ENCODE measurements at regions of chr4 and their contacts with region 1.

Region 1: DNA sequence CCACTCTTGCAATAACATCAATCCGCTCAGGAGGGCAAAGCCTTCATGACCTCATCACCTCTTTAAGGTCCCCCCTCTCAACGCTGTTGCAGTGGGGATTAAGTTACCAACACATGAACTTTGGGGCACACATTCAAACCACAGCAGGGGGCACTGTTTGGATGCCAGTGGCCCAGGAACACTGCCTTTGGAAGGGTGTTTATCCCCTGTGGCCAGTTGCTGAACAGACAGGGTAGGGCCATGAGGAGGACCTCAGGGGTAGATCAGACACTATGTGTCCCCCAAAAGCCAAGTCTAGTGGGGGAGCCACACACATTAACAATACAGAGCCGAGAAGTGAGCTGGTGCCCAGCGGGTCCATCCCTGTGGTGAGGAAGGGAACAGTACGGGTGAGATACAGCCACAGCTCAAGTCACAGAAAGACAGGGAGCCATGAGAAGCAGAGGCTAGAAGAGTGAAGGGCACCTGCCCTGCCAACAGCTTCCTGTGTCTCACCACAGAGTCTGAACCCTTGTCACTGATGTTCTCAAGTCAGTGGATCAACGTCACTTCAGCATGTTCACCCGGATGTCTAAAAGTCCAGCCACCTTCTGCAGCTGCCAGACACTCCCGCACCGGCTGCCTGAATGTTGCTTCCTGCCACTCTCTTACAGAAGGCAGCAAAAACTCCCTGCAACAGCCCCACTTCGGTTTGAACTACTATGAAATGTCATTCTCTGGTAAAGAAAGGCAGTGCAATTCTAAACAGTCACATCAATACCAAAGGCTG is 19.9 kb upstream of the MXD4 start:
- DNase-seq: peak; percentile 83
- ATAC-seq: peak; percentile 96
- H3K4me3 Mint-ChIP-seq: no peak overlapping the region
- H3K27ac Mint-ChIP-seq: peak overlapping the region; percentile 82
- H3K4me1 Mint-ChIP-seq: peaks cover 34% of the 10 kb centered on the region
- H3K27me3 Mint-ChIP-seq: no peaks in the 10 kb centered on the region

Region 2: DNA sequence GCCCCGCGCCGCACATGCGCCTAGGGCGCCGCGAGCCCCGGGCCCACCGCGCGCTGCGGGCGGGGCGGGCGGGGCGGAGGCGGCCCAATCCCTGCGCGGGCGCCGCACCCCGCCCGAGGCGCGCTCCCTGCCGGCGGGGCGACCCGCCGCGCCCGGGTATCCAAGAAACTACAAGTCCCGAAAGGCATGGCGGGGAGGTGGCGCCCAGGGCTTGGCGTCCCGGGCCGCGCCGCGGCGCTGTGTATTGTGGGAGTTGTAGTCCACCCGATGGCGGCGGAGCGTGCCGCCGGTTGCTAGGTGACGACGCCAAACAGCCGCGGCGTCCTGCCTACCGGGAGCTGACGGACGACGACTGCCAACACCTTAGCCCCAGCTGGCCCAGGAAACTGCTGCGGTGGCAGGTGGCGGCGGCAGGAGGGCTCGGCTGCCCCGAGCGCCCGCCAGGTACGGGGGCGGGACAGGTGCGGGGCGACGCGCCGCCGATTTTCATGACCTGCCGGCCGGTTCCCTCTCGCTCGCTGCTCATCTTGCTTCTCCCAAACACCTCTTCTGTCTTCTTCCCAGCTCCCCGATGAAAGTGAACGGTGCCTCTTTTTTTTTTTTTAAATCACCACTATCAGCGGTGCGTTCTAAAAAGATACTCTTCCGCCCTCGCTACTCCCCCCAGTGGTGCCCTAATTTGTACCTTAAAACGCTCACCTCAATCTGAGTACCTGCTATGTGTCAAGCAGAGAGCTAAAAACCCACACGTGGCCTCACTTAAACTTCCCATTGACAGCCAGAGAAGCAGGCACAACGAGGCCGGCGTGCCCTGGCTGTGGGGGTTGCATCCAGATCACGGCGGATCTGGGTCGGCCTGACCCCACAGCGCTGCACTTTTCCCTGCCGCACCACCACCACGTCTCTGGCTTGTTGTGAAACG is 137.2 kb after region 1 on chr4 and contains the start of gene CFAP99:
- CTCF ChIA-PET with region 1: no interaction called
- POLR2A ChIA-PET with region 1: no interaction called
- intact Hi-C with region 1: loop called (anchors 2 to 5 kb)
- DNase-seq: peak; percentile 99
- ATAC-seq: peak; percentile 93
- H3K4me3 Mint-ChIP-seq: peak within 1 kb of the TSS; percentile 82
- H3K27ac Mint-ChIP-seq: peak within 1 kb of the TSS; percentile 68
- H3K4me1 Mint-ChIP-seq: peaks cover 39% of the 10 kb centered on the region
- H3K27me3 Mint-ChIP-seq: peaks cover 27% of the 10 kb centered on the region
- total RNA-seq, gene CFAP99: 0.05 TPM in 1 of 2 experiments, not detected in the other

Region 3: DNA sequence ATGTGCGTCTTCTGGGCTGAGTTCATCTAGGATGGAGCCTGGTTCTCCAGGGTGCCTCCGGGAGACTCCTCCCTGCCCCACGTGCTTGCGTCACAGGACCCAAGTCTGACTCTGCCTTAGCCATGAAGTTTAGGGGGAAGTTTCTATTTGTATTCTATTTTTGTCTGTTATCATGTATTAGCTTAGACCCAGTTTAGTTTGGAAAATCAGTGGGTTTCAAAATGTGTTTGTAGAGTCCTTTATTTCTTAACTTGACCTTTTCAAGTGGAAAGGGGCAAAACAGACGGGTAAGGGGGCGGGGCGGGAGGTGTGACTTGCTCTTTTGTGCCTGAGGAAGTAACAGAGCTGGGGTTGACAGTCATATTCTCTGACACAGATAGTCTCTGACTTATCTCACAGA is 878.7 kb after region 1 on chr4:
- CTCF ChIA-PET with region 1: no interaction called
- POLR2A ChIA-PET with region 1: no interaction called
- intact Hi-C with region 1: no loop called
- DNase-seq: no peak
- ATAC-seq: no peak
- H3K4me3 Mint-ChIP-seq: no peak overlapping the region
- H3K27ac Mint-ChIP-seq: no peak overlapping the region
- H3K4me1 Mint-ChIP-seq: peaks cover 2% of the 10 kb centered on the region
- H3K27me3 Mint-ChIP-seq: no peaks in the 10 kb centered on the region

Measured in activated CD4-positive, alpha-beta T cell treated with anti-CD3 and anti-CD28 coated beads for 36 hours (primary cell).